Aorta (tissue), 5 donors: ENCODE measurements at regions of chr3 and their contacts with region 1.

Region 1: DNA sequence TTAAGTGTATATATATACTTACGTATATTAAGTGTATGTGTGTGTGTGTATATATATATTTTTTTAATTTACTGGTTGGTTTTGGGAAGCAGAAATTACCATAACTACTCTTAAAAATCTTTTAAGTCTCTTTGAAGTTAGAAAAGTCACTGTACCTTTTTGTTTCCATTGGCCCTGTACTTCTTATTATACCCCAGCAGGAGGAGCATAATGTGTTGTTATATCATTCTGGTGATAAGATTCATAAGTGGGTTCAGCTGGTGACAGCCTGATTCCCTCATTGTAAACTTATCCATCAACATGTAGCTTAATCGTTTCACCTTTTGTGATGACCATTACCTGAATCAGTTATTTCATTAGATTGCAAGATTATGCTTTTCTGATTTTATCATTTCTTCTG is 30.8 kb downstream of the MLH1 start:
- DNase-seq: no peak
- ATAC-seq: no peak
- H3K4me3 ChIP-seq: no peak overlapping the region
- H3K27ac ChIP-seq: no peak overlapping the region
- H3K4me1 ChIP-seq: peaks cover 0 to 2% of the 10 kb centered on the region in 2 donors
- H3K27me3 ChIP-seq: no peaks in the 10 kb centered on the region

Region 2: GRCh38 chr3:37210230-37210629 is 186.1 kb after region 1 on chr3:
- intact Hi-C with region 1: loop called (anchors 5 kb)
- DNase-seq: no peak
- ATAC-seq: no peak
- H3K4me3 ChIP-seq: no peak overlapping the region
- H3K27ac ChIP-seq: no peak overlapping the region
- H3K4me1 ChIP-seq: peaks cover 0 to 2% of the 10 kb centered on the region in 2 donors
- H3K27me3 ChIP-seq: no peaks in the 10 kb centered on the region

Region 3: DNA sequence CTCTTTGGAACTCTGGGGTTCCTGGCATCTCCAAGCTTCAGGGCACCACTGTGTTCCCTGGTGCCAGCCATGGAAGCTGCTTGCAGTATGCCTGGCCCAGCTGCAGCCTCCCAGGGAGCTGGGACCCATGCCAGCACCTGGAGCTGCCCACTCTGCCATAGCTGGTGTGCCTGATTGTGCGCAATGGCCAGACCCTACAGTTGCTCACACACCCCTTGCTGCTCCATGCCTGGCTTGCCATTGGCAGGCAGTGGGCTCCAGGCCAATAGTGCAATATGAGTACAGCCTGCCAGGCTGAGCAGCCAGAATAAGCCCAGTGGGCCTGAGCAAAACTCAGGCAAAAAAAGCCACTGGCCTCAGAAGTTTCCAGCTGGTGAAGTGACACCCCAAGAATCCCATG is 194.1 kb after region 1 on chr3:
- intact Hi-C with region 1: loop called (anchors 5 kb)
- DNase-seq: no peak
- ATAC-seq: no peak
- H3K4me3 ChIP-seq: no peak overlapping the region
- H3K27ac ChIP-seq: no peak overlapping the region
- H3K4me1 ChIP-seq: no peaks in the 10 kb centered on the region
- H3K27me3 ChIP-seq: no peaks in the 10 kb centered on the region